Mammary epithelial cell (primary cell): ENCODE measurements at regions of chr11 and their contacts with region 1.

Region 1: GRCh38 chr11:102225689-102226568 is 91.4 kb upstream of the BIRC3 start:
- DNase-seq: peak; percentile 91
- H3K4me3 ChIP-seq: peak overlapping the region in 2 of 3 experiments; percentile 23 to 40
- H3K27ac ChIP-seq: peak overlapping the region; percentile 99
- H3K4me1 ChIP-seq: peaks cover 75% of the 10 kb centered on the region
- H3K27me3 ChIP-seq: no peaks in the 10 kb centered on the region
- CTCF ChIP-seq: no peak

Region 2: GRCh38 chr11:101914738-101915426 is 311.0 kb before region 1 on chr11 and contains the start of gene CEP126:
- CTCF ChIA-PET with region 1: no interaction called
- dilution Hi-C with region 1: no loop called
- in situ Hi-C with region 1: no loop called
- intact Hi-C with region 1: loop called (anchors 10 kb)
- DNase-seq: peak; percentile 92
- H3K4me3 ChIP-seq: peak within 1 kb of the TSS; percentile 75 to 84 (median 82)
- H3K27ac ChIP-seq: peak within 1 kb of the TSS; percentile 93
- H3K4me1 ChIP-seq: peaks cover 12% of the 10 kb centered on the region
- H3K27me3 ChIP-seq: no peaks in the 10 kb centered on the region
- CTCF ChIP-seq: peak; percentile 20 to 59
- total RNA-seq, gene CEP126: 2.2 to 2.8 TPM

Region 3: GRCh38 chr11:102115557-102115956 is 110.4 kb before region 1 on chr11:
- CTCF ChIA-PET with region 1: no interaction called
- dilution Hi-C with region 1: loop called (anchors 5 kb)
- in situ Hi-C with region 1: no loop called
- intact Hi-C with region 1: loop called (anchors 1 kb)
- DNase-seq: peak; percentile 51
- H3K4me3 ChIP-seq: no peak overlapping the region
- H3K27ac ChIP-seq: no peak overlapping the region
- H3K4me1 ChIP-seq: peaks cover 31% of the 10 kb centered on the region
- H3K27me3 ChIP-seq: no peaks in the 10 kb centered on the region
- CTCF ChIP-seq: no peak

Region 4: GRCh38 chr11:102177974-102178631 is 47.8 kb before region 1 on chr11:
- CTCF ChIA-PET with region 1: no interaction called
- dilution Hi-C with region 1: loop called (anchors 5 kb)
- in situ Hi-C with region 1: no loop called
- intact Hi-C with region 1: no loop called
- DNase-seq: peak; percentile 96
- H3K4me3 ChIP-seq: no peak overlapping the region
- H3K27ac ChIP-seq: peak overlapping the region; percentile 66
- H3K4me1 ChIP-seq: peaks cover 28% of the 10 kb centered on the region
- H3K27me3 ChIP-seq: no peaks in the 10 kb centered on the region
- CTCF ChIP-seq: no peak

Region 5: DNA sequence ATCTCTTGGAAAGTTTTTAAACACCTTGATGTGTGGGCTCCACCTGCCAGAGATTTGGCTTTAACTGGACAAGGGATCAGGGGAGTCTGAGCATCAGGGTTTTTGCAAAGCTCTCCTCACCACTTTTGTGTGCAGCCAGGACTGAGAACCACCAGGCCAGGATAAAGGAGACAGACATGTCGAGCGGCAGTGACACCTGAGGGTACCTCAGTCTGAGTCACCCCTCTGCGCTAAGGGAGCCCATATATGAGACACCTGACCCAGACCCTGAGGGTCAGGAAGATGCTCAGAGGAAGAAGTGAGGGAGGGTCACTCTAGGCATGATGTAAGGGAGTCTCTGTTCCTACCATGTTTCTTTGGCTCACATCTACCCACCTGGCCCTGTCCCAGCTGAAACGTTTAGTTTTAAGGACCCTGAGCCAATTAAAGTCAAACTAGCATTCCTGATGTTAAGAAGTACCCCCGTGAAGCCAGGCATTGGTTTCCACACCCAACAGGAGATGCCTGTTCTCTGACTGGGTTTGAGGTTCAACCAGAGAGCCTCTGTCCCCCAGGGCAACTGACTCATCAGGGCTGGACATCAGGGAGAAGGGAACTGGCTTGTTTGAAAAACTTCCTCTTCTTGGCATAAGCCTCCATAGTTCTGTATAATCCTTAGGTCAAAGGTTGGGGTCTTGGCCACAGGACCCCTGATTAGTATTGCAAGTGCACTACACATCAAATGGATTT is 18.9 kb after region 1 on chr11:
- CTCF ChIA-PET with region 1: no interaction called
- dilution Hi-C with region 1: no loop called
- in situ Hi-C with region 1: no loop called
- intact Hi-C with region 1: loop called (anchors 2 kb)
- DNase-seq: peak; percentile 95
- H3K4me3 ChIP-seq: no peak overlapping the region
- H3K27ac ChIP-seq: peak overlapping the region; percentile 74
- H3K4me1 ChIP-seq: peaks cover 20% of the 10 kb centered on the region
- H3K27me3 ChIP-seq: no peaks in the 10 kb centered on the region
- CTCF ChIP-seq: no peak

Region 6: DNA sequence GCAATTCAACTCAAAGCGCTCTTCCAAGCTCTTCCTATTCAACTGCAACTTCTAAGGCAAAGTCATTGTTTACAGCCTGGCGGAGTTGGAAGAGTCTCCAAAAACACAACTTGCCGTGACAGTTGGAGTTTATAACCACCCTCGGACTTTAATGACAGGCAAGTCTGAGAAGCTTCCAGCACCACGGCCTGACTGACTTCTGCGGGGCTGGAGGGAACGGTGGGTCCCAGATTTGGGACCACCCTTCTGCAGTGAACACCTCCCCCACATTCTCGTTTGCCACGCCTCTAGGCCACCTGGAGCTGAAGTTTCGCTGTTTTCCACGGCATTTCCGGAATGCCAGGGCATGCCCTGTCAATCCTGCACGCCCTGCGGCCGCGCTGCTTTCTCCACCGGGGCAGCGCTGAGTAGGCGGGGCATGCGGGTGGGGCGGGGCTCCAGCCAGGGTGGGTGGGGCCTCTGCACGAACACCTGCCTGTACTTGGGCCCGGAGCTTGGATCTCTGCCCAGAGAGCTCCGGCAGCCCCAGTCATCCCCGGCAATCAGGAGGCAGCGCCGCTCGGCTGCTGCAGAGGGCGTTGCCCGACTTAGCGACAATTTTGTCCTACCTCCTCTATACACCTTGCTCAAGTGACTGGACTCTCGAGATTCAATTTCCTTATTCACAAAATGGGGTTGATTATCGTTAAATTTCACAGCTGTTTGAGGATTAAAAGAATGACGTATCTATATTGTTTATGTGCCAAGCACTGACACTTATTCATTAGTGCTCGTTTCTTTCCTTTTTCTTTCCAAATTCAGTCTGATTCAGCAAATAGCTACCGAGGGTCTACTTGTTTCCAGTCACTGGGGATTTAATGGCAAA is 42.6 kb after region 1 on chr11:
- CTCF ChIA-PET with region 1: interaction called, 6 read pairs
- dilution Hi-C with region 1: no loop called
- in situ Hi-C with region 1: no loop called
- intact Hi-C with region 1: loop called (anchors 2 kb)
- DNase-seq: peak; percentile 95
- H3K4me3 ChIP-seq: peak overlapping the region; percentile 32 to 56 (median 51)
- H3K27ac ChIP-seq: peak overlapping the region; percentile 90
- H3K4me1 ChIP-seq: peaks cover 36% of the 10 kb centered on the region
- H3K27me3 ChIP-seq: no peaks in the 10 kb centered on the region
- CTCF ChIP-seq: peak; percentile 66 to 78